Calu3 (cell line): ENCODE measurements at regions of chr18 and their contacts with region 1.

Region 1: GRCh38 chr18:77054606-77055428 is 77.8 kb downstream of the MBP start:
- DNase-seq: peak; percentile 96
- H3K4me3 Mint-ChIP-seq: peak overlapping the region; percentile 58
- H3K27ac Mint-ChIP-seq: peak overlapping the region; percentile 77
- H3K4me1 Mint-ChIP-seq: peaks cover 61% of the 10 kb centered on the region
- H3K27me3 Mint-ChIP-seq: no peaks in the 10 kb centered on the region
- CTCF ChIP-seq: peak; percentile 83

Region 2: DNA sequence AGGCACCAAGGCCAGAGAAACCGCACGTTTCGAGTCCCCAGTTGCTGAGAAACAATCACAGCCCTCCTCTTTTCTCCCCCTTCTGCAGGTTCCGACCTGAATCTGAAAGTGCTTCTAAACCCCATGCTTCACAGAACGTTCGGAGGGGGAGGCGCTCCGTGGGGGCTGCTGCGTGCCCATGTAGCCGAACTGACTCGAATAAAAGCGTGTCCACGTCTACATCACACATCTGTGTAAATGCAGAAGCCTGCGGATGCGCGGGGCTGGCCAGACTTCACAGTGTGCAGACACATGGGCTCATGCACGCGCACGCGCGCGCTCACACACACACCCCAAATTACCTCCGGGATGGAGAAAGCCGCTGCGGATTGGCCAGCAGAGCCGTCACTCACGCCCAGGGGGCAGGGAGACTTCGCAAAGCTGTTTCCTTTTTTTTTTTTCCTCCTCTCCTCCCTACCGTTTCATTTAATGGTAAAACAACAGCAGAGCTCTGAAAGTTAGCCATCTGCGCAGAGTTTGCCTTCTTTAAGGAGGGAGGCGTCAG is 562.1 kb before region 1 on chr18:
- CTCF ChIA-PET with region 1: no interaction called
- intact Hi-C with region 1: no loop called
- DNase-seq: peak; percentile 99
- H3K4me3 Mint-ChIP-seq: peak overlapping the region; percentile 89
- H3K27ac Mint-ChIP-seq: peak overlapping the region; percentile 91
- H3K4me1 Mint-ChIP-seq: peaks cover 27% of the 10 kb centered on the region
- H3K27me3 Mint-ChIP-seq: no peaks in the 10 kb centered on the region
- CTCF ChIP-seq: no peak

Region 3: DNA sequence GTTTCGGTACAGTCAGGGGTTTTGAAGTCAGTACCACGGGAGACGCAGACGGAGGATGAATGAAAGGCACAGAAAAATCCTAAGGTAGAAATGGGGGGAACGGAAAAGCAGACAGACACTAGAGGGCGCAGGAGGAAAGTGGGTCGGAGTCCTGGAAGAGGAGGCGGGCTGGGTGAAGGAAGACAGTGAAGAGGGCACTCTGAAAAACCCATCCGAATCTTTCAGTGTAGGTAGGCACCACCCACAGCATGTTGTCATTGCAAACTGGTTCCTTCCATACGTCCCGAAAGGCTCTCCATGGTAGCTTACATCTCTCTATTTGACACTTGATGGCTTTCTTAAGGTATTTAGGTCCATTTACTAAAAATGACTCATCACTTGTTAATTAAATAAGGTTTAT is 251.0 kb before region 1 on chr18:
- CTCF ChIA-PET with region 1: no interaction called
- intact Hi-C with region 1: loop called (anchors 2 kb)
- DNase-seq: peak; percentile 78
- H3K4me3 Mint-ChIP-seq: peak overlapping the region; percentile 26
- H3K27ac Mint-ChIP-seq: peak overlapping the region; percentile 38
- H3K4me1 Mint-ChIP-seq: peaks cover 8% of the 10 kb centered on the region
- H3K27me3 Mint-ChIP-seq: no peaks in the 10 kb centered on the region
- CTCF ChIP-seq: peak; percentile 75

Region 4: GRCh38 chr18:77000527-77000926 is 54.3 kb before region 1 on chr18:
- CTCF ChIA-PET with region 1: interaction called, 21 read pairs
- intact Hi-C with region 1: loop called (anchors 1 kb)
- DNase-seq: peak; percentile 82
- H3K4me3 Mint-ChIP-seq: no peak overlapping the region
- H3K27ac Mint-ChIP-seq: no peak overlapping the region
- H3K4me1 Mint-ChIP-seq: no peaks in the 10 kb centered on the region
- H3K27me3 Mint-ChIP-seq: no peaks in the 10 kb centered on the region
- CTCF ChIP-seq: peak; percentile 100

Region 5: GRCh38 chr18:77087393-77088141 is 32.8 kb after region 1 on chr18:
- CTCF ChIA-PET with region 1: interaction called, 11 read pairs
- intact Hi-C with region 1: no loop called
- DNase-seq: peak; percentile 67
- H3K4me3 Mint-ChIP-seq: peak overlapping the region; percentile 67
- H3K27ac Mint-ChIP-seq: peak overlapping the region; percentile 45
- H3K4me1 Mint-ChIP-seq: peaks cover 85% of the 10 kb centered on the region
- H3K27me3 Mint-ChIP-seq: no peaks in the 10 kb centered on the region
- CTCF ChIP-seq: no peak

Region 6: DNA sequence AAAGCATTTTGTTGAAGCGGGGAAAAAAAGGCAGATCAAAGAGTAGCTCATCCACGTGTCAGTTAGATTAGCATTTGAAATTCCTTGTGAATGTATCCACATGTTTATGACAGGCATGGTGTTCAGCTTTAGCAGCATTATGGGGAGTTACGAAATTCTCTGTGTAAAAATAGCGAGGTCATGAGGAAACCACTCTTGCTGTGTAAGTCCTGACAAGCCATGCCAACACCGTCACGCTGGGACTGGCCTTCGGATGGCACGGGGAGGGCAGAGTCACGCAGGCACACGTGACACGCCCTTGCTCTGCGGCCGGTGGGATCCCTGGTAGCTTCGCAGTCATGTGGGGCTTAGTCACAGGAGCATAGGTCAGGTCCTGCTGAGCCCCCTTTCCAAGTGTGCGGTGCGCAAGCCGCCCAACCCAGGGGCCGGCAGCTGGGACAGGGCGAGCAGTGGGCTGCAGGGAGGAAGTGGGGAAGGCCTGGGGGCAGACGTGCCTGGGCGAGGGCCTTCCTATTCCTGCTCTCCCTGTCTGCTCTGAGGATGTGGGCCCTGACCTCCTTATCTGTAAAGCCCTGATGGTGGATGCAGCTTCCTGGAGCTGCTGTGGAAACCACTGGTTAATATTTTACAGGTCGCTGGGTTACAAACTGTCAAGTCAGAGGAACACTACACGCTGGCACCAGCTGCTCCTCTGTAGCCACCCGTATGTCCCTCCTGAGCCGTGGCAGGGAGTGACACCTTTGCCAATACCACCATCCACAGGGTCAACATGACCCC is 59.8 kb after region 1 on chr18:
- CTCF ChIA-PET with region 1: interaction called, 16 read pairs
- intact Hi-C with region 1: no loop called
- DNase-seq: peak; percentile 97
- H3K4me3 Mint-ChIP-seq: peak overlapping the region; percentile 54
- H3K27ac Mint-ChIP-seq: peak overlapping the region; percentile 96
- H3K4me1 Mint-ChIP-seq: peaks cover 79% of the 10 kb centered on the region
- H3K27me3 Mint-ChIP-seq: no peaks in the 10 kb centered on the region
- CTCF ChIP-seq: no peak

Region 7: DNA sequence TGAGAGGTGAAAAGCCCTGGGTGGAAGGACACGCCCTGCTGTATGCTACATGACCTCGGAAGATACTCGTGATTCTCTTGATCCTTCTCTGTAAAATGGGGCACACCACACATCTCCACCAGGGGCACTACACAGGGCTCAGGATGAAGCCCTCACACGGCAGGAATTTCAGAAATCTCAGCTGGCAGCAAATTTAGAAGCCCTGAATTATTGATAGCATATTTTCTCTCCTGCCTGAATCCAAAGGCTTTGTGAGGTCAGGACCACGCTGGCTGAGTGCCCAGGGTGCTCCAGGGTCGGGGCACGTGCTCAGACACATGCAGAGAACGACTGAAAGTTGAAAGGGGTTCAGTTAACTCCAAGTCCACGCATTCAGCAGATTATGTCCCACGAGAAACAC is 152.7 kb after region 1 on chr18:
- CTCF ChIA-PET with region 1: interaction called, 26 read pairs
- intact Hi-C with region 1: loop called (anchors 2 kb)
- DNase-seq: peak; percentile 87
- H3K4me3 Mint-ChIP-seq: no peak overlapping the region
- H3K27ac Mint-ChIP-seq: no peak overlapping the region
- H3K4me1 Mint-ChIP-seq: peaks cover 20% of the 10 kb centered on the region
- H3K27me3 Mint-ChIP-seq: peaks cover 27% of the 10 kb centered on the region
- CTCF ChIP-seq: peak; percentile 98